ENCODE measurements at regions of chr15 and their contacts with region 1.

Region 1: DNA sequence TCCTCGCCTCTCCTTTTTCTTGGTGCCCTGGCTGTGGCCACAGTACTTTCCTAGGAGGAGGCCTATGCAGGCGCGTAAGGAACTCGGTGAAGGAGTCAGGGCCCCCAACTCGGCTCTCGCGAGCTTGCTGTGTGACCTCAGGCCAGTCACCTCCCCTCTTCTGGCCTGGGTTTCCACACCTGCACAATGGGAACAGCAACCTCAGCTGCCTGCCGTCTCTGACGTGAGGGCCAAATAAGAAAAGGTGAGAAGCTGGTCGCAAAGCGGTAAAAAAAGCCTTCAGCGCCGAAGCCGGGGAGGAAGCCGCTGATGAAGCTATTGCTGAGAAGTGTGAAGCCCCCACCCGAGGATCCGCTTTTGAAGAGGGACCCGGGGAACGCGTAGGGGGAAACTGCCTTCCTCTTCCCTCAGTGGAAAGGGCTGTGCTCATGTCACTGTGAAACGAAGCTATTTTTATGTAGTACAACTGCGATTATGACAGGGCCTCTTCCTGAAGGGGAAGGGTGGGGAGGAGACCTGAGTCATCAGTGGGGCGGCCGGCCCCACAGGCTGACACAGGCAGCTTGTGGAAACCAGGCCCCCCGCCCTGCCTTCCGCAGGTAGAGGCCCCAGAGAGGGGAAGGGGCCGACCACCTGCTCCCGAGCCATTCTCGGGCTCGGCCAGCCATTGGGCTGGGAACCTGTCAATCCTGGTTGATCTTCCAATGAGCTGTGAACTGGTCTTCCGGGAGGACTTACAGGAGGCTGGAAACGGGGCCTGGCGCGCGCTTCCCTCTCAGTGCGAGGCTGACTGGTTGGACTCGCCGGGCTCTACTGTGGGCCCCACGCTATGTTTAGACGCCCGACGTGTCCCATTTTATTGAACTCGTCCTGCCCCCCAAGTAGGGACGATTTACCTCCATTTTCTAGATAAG is 18.0 kb upstream of the ANKDD1A start:
- DNase-seq: peak; percentile 89
- CTCF ChIP-seq: no peak

Region 2: GRCh38 chr15:64841258-64842095 is 52.3 kb before region 1 on chr15 and contains the start of gene PLEKHO2:
- in situ Hi-C with region 1: loop called (anchors 10 kb)
- DNase-seq: peak; percentile 98
- CTCF ChIP-seq: peak; percentile 18